ENCODE measurements at regions of chr2 and their contacts with region 1.

Region 1: GRCh38 chr2:170973492-170974303 is 44.6 kb downstream of the GORASP2 start:
- DNase-seq: peak; percentile 92
- H3K4me3 Mint-ChIP-seq: peak overlapping the region; percentile 66
- H3K27ac Mint-ChIP-seq: peak overlapping the region; percentile 48
- H3K4me1 Mint-ChIP-seq: peaks cover 9% of the 10 kb centered on the region
- H3K27me3 Mint-ChIP-seq: no peaks in the 10 kb centered on the region

Region 2: DNA sequence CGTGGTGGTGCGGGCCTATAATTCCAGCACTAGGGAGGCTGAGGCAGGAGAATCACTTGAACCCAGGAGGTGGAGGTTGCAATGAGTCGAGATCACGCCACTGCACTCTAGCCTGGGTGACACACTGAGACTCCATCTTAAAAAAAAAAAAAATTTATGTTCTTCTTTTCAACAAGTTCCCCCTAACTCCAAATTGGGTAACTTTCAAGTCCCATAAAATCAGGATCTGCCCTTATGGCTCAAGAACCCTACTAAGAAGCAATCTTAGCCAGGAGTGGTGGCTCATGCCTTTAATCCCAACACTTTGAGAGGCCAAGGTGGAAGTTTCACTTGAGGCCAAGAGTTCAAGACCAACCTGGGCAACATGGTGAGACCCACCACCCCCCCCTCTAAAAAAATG is 217.3 kb after region 1 on chr2:
- CTCF ChIA-PET with region 1: no interaction called
- intact Hi-C with region 1: no loop called
- DNase-seq: no peak
- H3K4me3 Mint-ChIP-seq: no peak overlapping the region
- H3K27ac Mint-ChIP-seq: no peak overlapping the region
- H3K4me1 Mint-ChIP-seq: no peaks in the 10 kb centered on the region
- H3K27me3 Mint-ChIP-seq: no peaks in the 10 kb centered on the region

Region 3: GRCh38 chr2:171244970-171245782 is 271.5 kb after region 1 on chr2:
- CTCF ChIA-PET with region 1: no interaction called
- intact Hi-C with region 1: loop called (anchors 1 kb)
- DNase-seq: peak; percentile 32
- H3K4me3 Mint-ChIP-seq: no peak overlapping the region
- H3K27ac Mint-ChIP-seq: no peak overlapping the region
- H3K4me1 Mint-ChIP-seq: peaks cover 40% of the 10 kb centered on the region
- H3K27me3 Mint-ChIP-seq: no peaks in the 10 kb centered on the region

Region 4: DNA sequence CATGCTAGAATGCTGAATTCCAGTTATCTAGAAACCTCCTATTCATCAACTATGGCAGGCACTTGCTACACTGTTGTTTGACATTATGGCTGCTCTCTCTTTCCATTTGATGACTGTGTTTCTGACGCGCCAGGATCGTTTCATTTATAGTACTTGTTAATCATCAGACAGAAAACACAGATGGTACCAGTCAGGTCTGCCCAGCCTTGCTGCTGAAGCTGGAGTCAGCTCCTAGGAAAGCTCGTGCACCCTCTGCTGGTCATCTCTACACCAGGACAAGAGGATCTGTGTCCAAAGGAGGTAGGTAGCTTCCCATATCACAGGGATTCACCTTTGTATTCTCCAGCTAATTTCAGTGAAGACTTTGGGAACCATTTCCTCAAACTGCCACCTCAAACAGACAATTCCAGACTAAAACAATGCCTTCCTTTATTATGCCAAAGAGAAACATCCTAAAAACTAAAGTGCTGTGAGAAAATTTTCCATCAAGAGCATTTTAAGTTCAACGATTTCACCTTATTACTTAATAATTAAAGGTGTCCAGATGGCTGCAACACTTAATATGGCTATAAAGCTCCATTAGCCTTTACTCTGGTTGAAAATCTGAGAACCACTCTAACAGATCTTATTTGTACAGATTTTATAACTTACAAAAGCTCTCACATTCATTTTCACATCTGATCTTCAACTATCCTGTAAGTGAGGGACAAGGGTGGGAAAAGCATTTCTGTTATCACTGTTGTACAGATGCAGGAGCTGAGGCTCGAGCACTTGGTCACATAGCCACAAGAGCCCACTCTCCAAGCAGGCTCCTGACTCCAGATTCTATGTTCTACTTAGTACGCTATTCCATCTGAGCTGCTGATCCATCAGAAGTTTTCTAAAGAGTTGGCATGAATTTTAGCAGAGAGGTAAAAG is 442.6 kb after region 1 on chr2:
- CTCF ChIA-PET with region 1: interaction called, 15 read pairs
- intact Hi-C with region 1: loop called (anchors 1 kb)
- DNase-seq: peak; percentile 96
- H3K4me3 Mint-ChIP-seq: peak overlapping the region; percentile 32
- H3K27ac Mint-ChIP-seq: peak overlapping the region; percentile 92
- H3K4me1 Mint-ChIP-seq: peaks cover 38% of the 10 kb centered on the region
- H3K27me3 Mint-ChIP-seq: no peaks in the 10 kb centered on the region

Region 5: DNA sequence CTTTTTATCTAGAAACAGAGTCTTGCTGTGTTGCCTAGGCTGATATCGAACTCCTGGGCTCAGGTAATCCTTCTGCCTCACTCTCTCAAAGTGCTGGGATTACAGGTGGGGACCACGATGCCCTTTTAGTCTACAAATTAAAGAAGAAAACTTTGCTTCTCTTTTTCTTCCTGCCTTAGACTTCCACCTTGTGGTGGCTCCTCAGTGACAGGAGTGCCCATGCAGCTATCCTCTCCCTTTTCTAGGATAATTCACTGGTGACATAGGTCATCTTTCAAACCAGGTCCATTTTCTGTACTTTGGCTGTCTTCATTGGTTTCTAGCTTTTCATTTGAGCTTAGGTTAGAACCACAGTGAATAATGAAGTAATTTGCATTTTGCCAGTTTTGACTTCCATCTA is 474.0 kb after region 1 on chr2:
- CTCF ChIA-PET with region 1: no interaction called
- intact Hi-C with region 1: loop called (anchors 1 kb)
- DNase-seq: peak; percentile 7
- H3K4me3 Mint-ChIP-seq: no peak overlapping the region
- H3K27ac Mint-ChIP-seq: no peak overlapping the region
- H3K4me1 Mint-ChIP-seq: no peaks in the 10 kb centered on the region
- H3K27me3 Mint-ChIP-seq: no peaks in the 10 kb centered on the region

Region 6: GRCh38 chr2:171574149-171574795 is 600.6 kb after region 1 on chr2:
- CTCF ChIA-PET with region 1: interaction called, 3 read pairs
- intact Hi-C with region 1: loop called (anchors 5 kb)
- DNase-seq: peak; percentile 86
- H3K4me3 Mint-ChIP-seq: no peak overlapping the region
- H3K27ac Mint-ChIP-seq: peak overlapping the region; percentile 53
- H3K4me1 Mint-ChIP-seq: peaks cover 5% of the 10 kb centered on the region
- H3K27me3 Mint-ChIP-seq: no peaks in the 10 kb centered on the region